Activated naive CD8-positive, alpha-beta T cell treated with anti-CD3 and anti-CD28 coated beads, Interleukin-2, amount 10 ng/mL, durations not matched to agents 7 days and 5 days (primary cell): ENCODE measurements at regions of chr7 and their contacts with region 1.

Region 1: GRCh38 chr7:56063882-56064625 is at the start of gene SUMF2:
- DNase-seq: peak; percentile 94
- ATAC-seq: peak; percentile 97
- H3K4me3 Mint-ChIP-seq: peak within 1 kb of the TSS; percentile 93
- H3K27ac Mint-ChIP-seq: peak within 1 kb of the TSS; percentile 91
- H3K4me1 Mint-ChIP-seq: peaks cover 26% of the 10 kb centered on the region
- H3K27me3 Mint-ChIP-seq: no peaks in the 10 kb centered on the region
- total RNA-seq, gene SUMF2: 147 to 156 TPM

Region 2: DNA sequence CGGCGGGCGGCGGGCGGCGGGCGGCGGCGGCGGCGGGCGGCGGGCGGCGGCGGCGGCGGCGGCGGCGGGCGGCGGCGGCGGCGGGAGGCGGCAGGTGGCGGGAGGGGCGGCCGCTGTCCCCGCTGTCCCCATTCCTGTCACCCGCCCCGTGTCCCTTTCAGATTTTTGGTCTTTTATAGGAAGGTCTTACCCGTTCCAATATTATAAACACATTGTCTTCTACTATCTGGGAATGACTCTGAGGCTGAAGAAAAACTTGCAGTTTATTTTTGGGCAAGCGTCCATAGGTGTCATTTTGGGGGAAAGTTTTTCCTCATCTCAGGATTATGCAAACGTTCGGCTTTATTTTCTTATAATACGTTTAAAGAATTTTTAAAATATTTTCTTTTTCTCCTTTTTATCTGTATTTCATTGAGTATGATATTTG is 176.2 kb before region 1 on chr7:
- POLR2A ChIA-PET with region 1: no interaction called
- DNase-seq: no peak
- ATAC-seq: no peak
- H3K4me3 Mint-ChIP-seq: peak overlapping the region; percentile 83
- H3K27ac Mint-ChIP-seq: peak overlapping the region; percentile 80
- H3K4me1 Mint-ChIP-seq: peaks cover 6% of the 10 kb centered on the region
- H3K27me3 Mint-ChIP-seq: no peaks in the 10 kb centered on the region

Region 3: GRCh38 chr7:56051339-56052191 is 12.5 kb before region 1 on chr7 and contains the starts of genes CCT6A and PSPH:
- POLR2A ChIA-PET with region 1: interaction called, 48 read pairs
- DNase-seq: peak; percentile 92
- ATAC-seq: peak; percentile 93
- H3K4me3 Mint-ChIP-seq: peak within 1 kb of the TSS; percentile 100
- H3K27ac Mint-ChIP-seq: peak within 1 kb of the TSS; percentile 95
- H3K4me1 Mint-ChIP-seq: peaks cover 33% of the 10 kb centered on the region
- H3K27me3 Mint-ChIP-seq: no peaks in the 10 kb centered on the region
- total RNA-seq, gene CCT6A: 94.9 to 102 TPM
- total RNA-seq, gene PSPH: 7.9 to 10.1 TPM

Region 4: DNA sequence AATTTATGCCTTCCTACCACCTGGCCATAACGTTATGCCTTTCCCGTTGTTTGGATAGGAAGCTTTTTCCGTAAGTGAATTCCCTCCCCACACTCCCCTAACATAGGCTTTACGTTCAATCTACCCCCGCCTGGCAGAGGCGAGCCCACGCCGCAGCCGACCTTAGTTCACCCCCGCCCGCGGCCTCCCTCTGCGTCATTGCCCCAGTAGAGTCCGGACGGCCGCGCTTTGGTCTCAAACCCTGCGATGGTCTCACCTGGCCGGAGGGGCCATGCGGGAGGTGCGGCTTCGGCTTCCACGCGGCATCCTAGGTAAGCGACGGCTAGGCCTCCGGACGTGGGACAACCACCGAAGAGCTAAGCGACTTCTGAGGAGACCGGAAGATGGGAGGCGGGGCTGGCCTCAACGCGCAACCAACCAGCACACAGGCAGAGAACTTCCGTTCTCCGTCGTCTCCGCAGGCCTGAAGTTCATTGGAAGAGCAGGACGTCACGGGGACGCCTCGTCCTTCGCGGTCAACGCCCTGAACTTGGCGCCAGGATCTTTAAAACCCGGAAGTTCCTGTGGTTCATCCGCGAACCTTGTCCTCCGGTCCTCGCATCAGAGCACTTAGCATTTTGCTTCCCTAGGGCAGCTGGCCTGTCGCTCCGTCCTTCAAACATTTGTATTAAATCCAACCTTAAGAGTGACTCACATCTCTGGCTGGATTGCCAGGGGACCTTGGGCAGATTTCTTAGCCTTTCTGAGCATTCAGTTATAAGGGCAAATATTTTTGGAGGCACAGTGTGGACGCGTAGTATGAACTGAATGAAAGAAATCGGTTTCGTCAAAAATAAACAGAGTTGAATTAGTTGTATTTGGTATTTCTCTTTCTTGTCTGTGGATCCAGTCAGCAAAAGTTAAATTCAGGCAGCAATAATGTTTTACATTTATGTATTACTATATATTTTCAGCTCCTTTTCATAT is 42.3 kb after region 1 on chr7 and contains the start of gene CHCHD2:
- POLR2A ChIA-PET with region 1: interaction called, 35 read pairs
- DNase-seq: peak; percentile 85
- ATAC-seq: peak; percentile 98
- H3K4me3 Mint-ChIP-seq: peak within 1 kb of the TSS; percentile 99
- H3K27ac Mint-ChIP-seq: peak within 1 kb of the TSS; percentile 98
- H3K4me1 Mint-ChIP-seq: peaks cover 24% of the 10 kb centered on the region
- H3K27me3 Mint-ChIP-seq: no peaks in the 10 kb centered on the region
- total RNA-seq, gene CHCHD2: 354 to 370 TPM

Region 5: DNA sequence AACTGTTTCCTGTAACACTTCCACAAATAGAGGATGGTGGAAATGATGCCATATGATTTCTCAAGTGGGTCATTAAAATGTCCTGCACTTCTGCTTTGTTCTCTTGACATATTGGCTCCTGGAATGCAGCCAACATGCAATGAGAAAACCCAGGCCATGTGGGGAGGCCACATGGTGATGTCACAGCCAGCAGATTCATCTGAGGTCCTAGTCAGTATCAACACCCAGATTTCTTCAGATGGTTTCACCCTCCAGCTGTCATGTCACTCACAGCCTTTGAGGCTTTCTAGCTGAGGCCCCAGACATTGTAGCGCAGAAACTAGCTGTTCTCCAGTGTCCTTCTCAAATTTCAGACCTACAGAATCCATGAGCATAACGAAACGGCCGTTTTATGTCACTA is 154.5 kb after region 1 on chr7:
- POLR2A ChIA-PET with region 1: no interaction called
- DNase-seq: no peak
- ATAC-seq: no peak
- H3K4me3 Mint-ChIP-seq: no peak overlapping the region
- H3K27ac Mint-ChIP-seq: no peak overlapping the region
- H3K4me1 Mint-ChIP-seq: no peaks in the 10 kb centered on the region
- H3K27me3 Mint-ChIP-seq: no peaks in the 10 kb centered on the region